ENCODE measurements at regions of chr5 and their contacts with region 1.

Region 1: GRCh38 chr5:90932052-90932699 is 373.6 kb downstream of the ADGRV1 start:
- DNase-seq: no peak
- ATAC-seq: peak; percentile 83
- H3K4me3 ChIP-seq: no peak overlapping the region
- H3K27ac ChIP-seq: no peak overlapping the region
- H3K4me1 ChIP-seq: no peaks in the 10 kb centered on the region
- H3K27me3 ChIP-seq: no peaks in the 10 kb centered on the region

Region 2: GRCh38 chr5:90434116-90434714 is 498.0 kb before region 1 on chr5:
- intact Hi-C with region 1: no loop called
- DNase-seq: no peak
- ATAC-seq: no peak
- H3K4me3 ChIP-seq: no peak overlapping the region
- H3K27ac ChIP-seq: no peak overlapping the region
- H3K4me1 ChIP-seq: no peaks in the 10 kb centered on the region
- H3K27me3 ChIP-seq: no peaks in the 10 kb centered on the region

Region 3: DNA sequence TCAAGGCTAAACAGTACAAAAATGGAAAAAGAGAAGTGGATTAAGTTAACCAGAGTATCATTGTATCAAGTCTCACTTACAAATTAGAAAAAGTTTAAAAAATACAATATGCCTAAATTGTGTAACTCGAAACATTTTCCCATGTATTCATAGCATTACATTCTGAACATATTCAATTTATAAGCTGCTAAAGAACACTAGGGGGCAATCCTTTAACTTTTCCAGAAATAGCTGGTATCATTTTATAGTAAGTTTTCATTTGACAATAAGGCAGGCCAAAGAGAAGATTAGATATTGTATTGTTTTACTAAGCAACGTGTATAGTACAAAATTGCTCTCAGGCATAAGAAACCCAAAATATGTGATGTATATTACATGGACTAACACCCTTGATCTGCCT is 139.0 kb before region 1 on chr5:
- intact Hi-C with region 1: no loop called
- DNase-seq: no peak
- ATAC-seq: no peak
- H3K4me3 ChIP-seq: no peak overlapping the region
- H3K27ac ChIP-seq: no peak overlapping the region
- H3K4me1 ChIP-seq: no peaks in the 10 kb centered on the region
- H3K27me3 ChIP-seq: no peaks in the 10 kb centered on the region

Region 4: DNA sequence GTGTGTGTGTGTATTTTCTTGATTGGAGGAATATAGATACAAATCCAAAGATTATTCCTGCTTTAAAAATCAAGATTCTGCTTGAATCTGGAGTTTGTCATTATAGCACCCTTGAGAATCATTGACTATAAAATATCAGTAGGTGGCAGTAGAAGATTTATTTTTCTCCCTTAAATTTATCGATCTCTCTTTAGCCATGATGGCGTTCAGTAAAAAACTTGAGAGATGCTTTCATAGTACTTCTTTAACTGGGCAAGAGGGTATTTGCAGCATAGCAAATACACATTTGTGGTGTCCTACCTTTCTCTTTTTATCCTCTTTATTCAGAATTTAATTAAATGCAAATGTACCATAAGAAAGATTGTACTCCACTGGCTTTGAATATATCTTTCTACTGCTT is 65.8 kb before region 1 on chr5:
- intact Hi-C with region 1: loop called in 1 of 2 experiments (anchors 5 kb)
- DNase-seq: no peak
- ATAC-seq: peak; percentile 69
- H3K4me3 ChIP-seq: peak overlapping the region in 1 of 2 donors; percentile 26
- H3K27ac ChIP-seq: no peak overlapping the region
- H3K4me1 ChIP-seq: no peaks in the 10 kb centered on the region
- H3K27me3 ChIP-seq: no peaks in the 10 kb centered on the region

Region 5: DNA sequence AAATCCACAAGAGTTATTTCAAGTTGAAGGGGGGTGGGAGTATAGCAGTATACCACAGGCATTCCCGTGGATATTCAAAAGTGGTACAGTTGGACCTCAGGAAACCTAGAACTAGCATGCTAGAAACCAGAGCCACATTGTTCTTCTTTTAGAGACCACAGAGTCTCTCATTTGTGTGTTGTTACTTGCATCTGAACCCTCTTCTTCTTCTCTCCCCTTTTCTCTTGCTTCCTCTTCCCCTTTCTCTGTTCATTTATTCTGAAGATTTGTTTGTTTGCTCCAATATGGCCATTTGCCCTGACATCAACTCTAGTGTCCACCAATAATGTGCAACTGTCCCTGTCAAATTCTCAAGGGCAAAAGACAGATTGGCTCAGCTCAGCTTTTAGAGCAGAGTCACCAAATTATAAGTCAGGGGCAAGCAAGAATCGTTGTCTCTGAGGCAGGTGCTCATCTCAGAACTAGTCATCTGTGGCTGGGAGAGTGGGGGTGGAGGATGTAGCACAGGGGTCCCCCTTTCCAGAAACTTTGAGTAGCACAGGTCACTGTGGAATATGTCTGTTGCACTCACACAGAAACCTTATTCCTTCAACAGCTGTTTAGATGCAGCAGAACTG is 129.9 kb after region 1 on chr5:
- intact Hi-C with region 1: loop called in 1 of 2 experiments (anchors 10 kb)
- DNase-seq: no peak
- ATAC-seq: no peak
- H3K4me3 ChIP-seq: no peak overlapping the region
- H3K27ac ChIP-seq: peak overlapping the region in 1 of 2 donors; percentile 10
- H3K4me1 ChIP-seq: peaks cover 0 to 4% of the 10 kb centered on the region in 2 donors
- H3K27me3 ChIP-seq: no peaks in the 10 kb centered on the region

Region 6: DNA sequence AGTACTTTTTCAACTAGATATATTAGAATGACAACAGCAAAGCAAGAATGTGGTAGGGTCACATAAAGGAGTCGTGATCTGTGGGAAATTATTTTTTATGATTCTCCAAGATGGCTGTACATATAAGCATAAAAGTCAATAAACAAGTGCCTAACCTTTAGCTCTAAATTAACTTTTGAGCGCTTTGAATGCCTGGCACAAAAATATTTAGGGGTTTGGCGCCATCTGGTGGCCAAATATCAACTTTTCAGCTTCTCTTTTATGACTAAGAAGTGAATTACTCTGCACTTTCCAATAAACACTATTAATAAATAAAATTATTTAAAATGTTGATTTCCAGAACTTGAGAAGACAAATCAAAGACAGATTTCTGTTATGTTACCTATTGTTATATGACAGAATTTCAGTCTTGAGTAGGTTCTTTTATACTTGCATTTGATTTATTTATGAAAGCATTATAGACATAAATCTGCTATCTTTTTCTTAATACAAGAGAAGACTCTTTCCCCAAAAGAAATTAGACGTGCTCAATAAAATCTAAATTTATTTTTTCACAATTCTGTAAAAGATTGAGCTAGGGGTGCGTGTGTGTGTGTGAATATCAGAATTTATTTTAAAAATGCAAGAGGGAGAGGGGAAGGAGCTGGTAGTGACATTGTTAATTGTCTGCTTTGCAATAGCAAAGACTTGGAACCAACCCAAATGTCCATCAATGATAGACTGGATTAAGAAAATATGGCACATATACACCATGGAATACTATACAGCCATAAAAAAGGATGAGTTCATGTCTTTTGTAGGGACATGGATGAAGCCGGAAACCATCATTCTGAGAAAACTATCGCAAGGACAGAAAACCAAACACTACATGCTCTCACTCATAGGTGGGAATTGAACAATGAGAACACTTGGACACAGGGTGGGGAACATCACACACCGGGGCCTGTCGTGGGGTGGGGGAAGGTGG is 487.7 kb after region 1 on chr5:
- intact Hi-C with region 1: loop called in 1 of 2 experiments (anchors 5 kb)
- DNase-seq: peak; percentile 55 to 76
- ATAC-seq: no peak
- H3K4me3 ChIP-seq: no peak overlapping the region
- H3K27ac ChIP-seq: no peak overlapping the region
- H3K4me1 ChIP-seq: no peaks in the 10 kb centered on the region
- H3K27me3 ChIP-seq: no peaks in the 10 kb centered on the region

Measured in aorta (tissue), 5 donors.